PC-9 (cell line): ENCODE measurements at regions of chr2 and their contacts with region 1.

Region 1: DNA sequence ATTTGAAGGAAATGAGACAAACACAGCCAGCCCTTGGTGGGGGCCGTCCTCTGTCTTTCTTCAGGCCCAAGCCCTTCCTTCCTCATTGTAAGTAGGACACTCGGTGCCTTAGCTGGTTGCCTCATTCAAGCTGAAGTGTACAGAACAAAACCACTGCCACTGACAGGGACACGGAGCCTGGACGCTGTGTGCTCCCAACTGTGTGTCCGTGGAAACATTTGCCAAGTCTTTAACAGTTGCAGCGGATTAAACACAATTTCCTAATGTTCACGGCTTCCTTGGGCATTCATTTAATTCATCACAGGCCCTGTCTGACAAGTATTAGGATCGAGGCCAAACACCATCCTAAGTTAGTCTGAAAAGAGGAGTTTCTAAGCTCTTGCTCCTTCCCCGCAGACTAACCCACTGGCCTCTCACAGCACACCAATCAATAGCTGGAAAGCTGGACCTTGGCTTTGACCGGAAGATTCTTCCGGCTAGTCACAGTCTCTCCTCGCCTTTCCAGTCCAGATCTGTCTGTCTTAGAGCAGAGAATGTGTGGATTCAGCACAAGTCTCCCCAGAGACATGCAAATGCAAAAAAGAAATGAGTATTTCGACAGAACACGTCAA is 68.7 kb upstream of the ACSL3 start:
- DNase-seq: no peak
- H3K4me3 ChIP-seq: no peak overlapping the region
- H3K27ac ChIP-seq: no peak overlapping the region
- H3K4me1 ChIP-seq: peaks cover 29% of the 10 kb centered on the region
- H3K27me3 ChIP-seq: no peaks in the 10 kb centered on the region
- CTCF ChIP-seq: no peak

Region 2: GRCh38 chr2:222753251-222753824 is 38.8 kb before region 1 on chr2:
- CTCF ChIA-PET with region 1: interaction called, 9 read pairs
- POLR2A ChIA-PET with region 1: interaction called, 5 read pairs
- intact Hi-C with region 1: loop called (anchors 1 kb)
- DNase-seq: no peak
- H3K4me3 ChIP-seq: no peak overlapping the region
- H3K27ac ChIP-seq: no peak overlapping the region
- H3K4me1 ChIP-seq: peaks cover 28% of the 10 kb centered on the region
- H3K27me3 ChIP-seq: no peaks in the 10 kb centered on the region
- CTCF ChIP-seq: no peak

Region 3: DNA sequence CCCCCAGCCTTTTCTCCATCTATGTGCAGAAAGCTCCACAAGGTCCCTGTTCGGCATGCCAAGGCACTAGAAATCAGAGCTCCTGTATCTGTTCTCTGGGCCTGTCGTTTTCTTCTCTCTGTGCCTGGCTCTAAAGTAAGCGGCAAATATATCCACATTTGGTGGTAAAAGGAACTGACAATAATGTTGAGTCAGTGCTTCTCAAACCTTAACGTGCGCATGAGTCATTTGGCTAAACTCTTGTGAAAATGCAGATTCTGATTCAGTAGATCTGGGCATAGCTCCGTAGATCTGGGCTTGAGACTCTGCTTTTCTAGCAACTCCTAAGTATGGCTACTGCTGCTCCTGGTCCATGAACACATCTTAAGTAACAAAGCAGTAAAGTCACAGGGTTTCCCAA is 52.2 kb after region 1 on chr2:
- CTCF ChIA-PET with region 1: interaction called, 8 read pairs
- POLR2A ChIA-PET with region 1: interaction called, 4 read pairs
- intact Hi-C with region 1: loop called (anchors 2 kb)
- DNase-seq: peak in 1 of 2 experiments; percentile 79
- H3K4me3 ChIP-seq: peak overlapping the region; percentile 6; the same call in 1 of the 2 replicates
- H3K27ac ChIP-seq: peak overlapping the region; percentile 64
- H3K4me1 ChIP-seq: peaks cover 88% of the 10 kb centered on the region
- H3K27me3 ChIP-seq: no peaks in the 10 kb centered on the region
- CTCF ChIP-seq: no peak

Region 4: GRCh38 chr2:222884114-222884771 is 92.1 kb after region 1 on chr2:
- CTCF ChIA-PET with region 1: no interaction called
- POLR2A ChIA-PET with region 1: interaction called, 20 read pairs
- intact Hi-C with region 1: loop called (anchors 2 kb)
- DNase-seq: no peak
- H3K4me3 ChIP-seq: no peak overlapping the region
- H3K27ac ChIP-seq: peak overlapping the region; percentile 1; the same call in 1 of the 2 replicates
- H3K4me1 ChIP-seq: peaks cover 68% of the 10 kb centered on the region
- H3K27me3 ChIP-seq: no peaks in the 10 kb centered on the region
- CTCF ChIP-seq: no peak

Region 5: GRCh38 chr2:223674998-223675609 is 883.0 kb after region 1 on chr2:
- CTCF ChIA-PET with region 1: no interaction called
- POLR2A ChIA-PET with region 1: interaction called, 13 read pairs
- intact Hi-C with region 1: no loop called
- DNase-seq: peak; percentile 50 to 64
- H3K4me3 ChIP-seq: no peak overlapping the region
- H3K27ac ChIP-seq: no peak overlapping the region
- H3K4me1 ChIP-seq: no peaks in the 10 kb centered on the region
- H3K27me3 ChIP-seq: no peaks in the 10 kb centered on the region
- CTCF ChIP-seq: peak; percentile 94

Region 6: GRCh38 chr2:223944703-223945531 is 1152.8 kb after region 1 on chr2 and contains the start of gene WDFY1:
- CTCF ChIA-PET with region 1: no interaction called
- POLR2A ChIA-PET with region 1: no interaction called
- intact Hi-C with region 1: no loop called
- DNase-seq: peak; percentile 77 to 94
- H3K4me3 ChIP-seq: peak within 1 kb of the TSS; percentile 74
- H3K27ac ChIP-seq: 0 out of 2 replicates have a peak within 1 kb of the TSS, but pooled peaks have one; percentile 1
- H3K4me1 ChIP-seq: peaks cover 42% of the 10 kb centered on the region
- H3K27me3 ChIP-seq: no peaks in the 10 kb centered on the region
- CTCF ChIP-seq: no peak
- total RNA-seq, gene WDFY1: 81.9 and 84.4 TPM in 2 replicates